ENCODE measurements at regions of chr9 and their contacts with region 1.

Region 1: GRCh38 chr9:98315551-98316060 is 60.2 kb upstream of the TBC1D2 start:
- DNase-seq: peak; percentile 89 to 90
- H3K4me3 ChIP-seq: no peak overlapping the region
- H3K4me3 Mint-ChIP-seq: no peak overlapping the region
- H3K27ac Mint-ChIP-seq: no peak overlapping the region
- H3K4me1 ChIP-seq: no peaks in the 10 kb centered on the region
- H3K4me1 Mint-ChIP-seq: peaks cover 13% of the 10 kb centered on the region
- H3K27me3 ChIP-seq: no peaks in the 10 kb centered on the region
- H3K27me3 Mint-ChIP-seq: no peaks in the 10 kb centered on the region
- CTCF ChIP-seq: peak; percentile 93 to 97

Region 2: DNA sequence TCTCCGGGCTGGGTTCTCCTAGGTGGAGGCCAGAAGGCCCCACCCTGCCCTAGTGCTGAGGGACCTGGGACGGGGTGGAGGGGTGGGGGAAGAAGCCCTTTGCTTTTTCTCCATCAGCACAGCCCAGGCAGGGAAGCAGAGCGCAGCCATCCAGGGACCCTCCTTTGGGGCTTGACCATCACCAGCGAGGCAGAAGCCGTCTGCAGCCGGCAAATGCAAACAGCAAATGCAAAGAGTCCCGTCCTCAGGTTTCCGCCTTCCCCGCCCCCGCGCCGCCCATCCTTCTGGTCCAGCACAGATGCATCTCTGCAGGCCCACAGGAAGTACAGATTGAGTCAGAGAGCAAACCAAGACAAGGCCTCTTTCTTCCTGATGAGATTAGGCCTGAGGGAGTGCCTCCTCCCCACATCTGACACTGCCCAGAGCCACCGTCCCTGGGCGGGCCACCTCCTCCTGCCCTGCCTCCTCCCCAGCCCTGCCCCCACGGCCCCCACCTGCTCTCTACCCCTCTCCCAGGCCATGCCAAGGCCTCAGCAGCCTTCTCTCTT is 146.6 kb before region 1 on chr9:
- CTCF ChIA-PET with region 1: no interaction called
- POLR2A ChIA-PET with region 1: no interaction called
- intact Hi-C with region 1: no loop called
- DNase-seq: peak in 1 of 2 experiments; percentile 58
- H3K4me3 ChIP-seq: no peak overlapping the region
- H3K4me3 Mint-ChIP-seq: no peak overlapping the region
- H3K27ac Mint-ChIP-seq: no peak overlapping the region
- H3K4me1 ChIP-seq: peaks cover 41% of the 10 kb centered on the region
- H3K4me1 Mint-ChIP-seq: peaks cover 34% of the 10 kb centered on the region
- H3K27me3 ChIP-seq: no peaks in the 10 kb centered on the region
- H3K27me3 Mint-ChIP-seq: no peaks in the 10 kb centered on the region
- CTCF ChIP-seq: no peak

Region 3: GRCh38 chr9:98374385-98375051 is 58.9 kb after region 1 on chr9:
- CTCF ChIA-PET with region 1: no interaction called
- POLR2A ChIA-PET with region 1: no interaction called
- intact Hi-C with region 1: loop called (anchors 2 kb)
- DNase-seq: peak; percentile 87 to 95
- H3K4me3 ChIP-seq: no peak overlapping the region
- H3K4me3 Mint-ChIP-seq: peak overlapping the region; percentile 47
- H3K27ac Mint-ChIP-seq: peak overlapping the region; percentile 88
- H3K4me1 ChIP-seq: peaks cover 31% of the 10 kb centered on the region
- H3K4me1 Mint-ChIP-seq: peaks cover 12% of the 10 kb centered on the region
- H3K27me3 ChIP-seq: no peaks in the 10 kb centered on the region
- H3K27me3 Mint-ChIP-seq: no peaks in the 10 kb centered on the region
- CTCF ChIP-seq: no peak

Region 4: DNA sequence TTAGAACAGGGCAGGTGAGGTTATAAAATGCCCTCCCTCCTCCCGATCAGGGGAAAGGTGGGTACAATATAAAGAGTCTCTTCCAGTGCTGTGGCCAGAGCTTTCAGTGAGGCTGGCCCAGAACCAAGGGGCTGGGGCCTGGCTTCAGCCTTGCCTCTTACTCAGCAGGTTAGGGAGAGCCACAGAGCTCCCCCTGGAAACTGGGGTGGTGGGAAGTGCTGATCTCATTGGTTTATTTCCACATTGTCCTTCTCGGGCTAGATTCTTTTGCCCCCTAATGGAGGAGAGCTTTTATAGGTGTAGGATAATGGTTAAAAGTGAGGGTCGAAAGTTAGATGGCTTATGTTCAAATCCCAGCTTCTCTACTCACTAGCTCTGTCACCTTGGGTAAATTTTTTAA is 126.5 kb after region 1 on chr9:
- CTCF ChIA-PET with region 1: no interaction called
- POLR2A ChIA-PET with region 1: no interaction called
- intact Hi-C with region 1: loop called (anchors 5 kb)
- DNase-seq: no peak
- H3K4me3 ChIP-seq: no peak overlapping the region
- H3K4me3 Mint-ChIP-seq: no peak overlapping the region
- H3K27ac Mint-ChIP-seq: no peak overlapping the region
- H3K4me1 ChIP-seq: no peaks in the 10 kb centered on the region
- H3K4me1 Mint-ChIP-seq: no peaks in the 10 kb centered on the region
- H3K27me3 ChIP-seq: no peaks in the 10 kb centered on the region
- H3K27me3 Mint-ChIP-seq: peaks cover 11% of the 10 kb centered on the region
- CTCF ChIP-seq: no peak

Region 5: GRCh38 chr9:98523231-98523896 is 207.8 kb after region 1 on chr9:
- CTCF ChIA-PET with region 1: interaction called, 5 read pairs
- POLR2A ChIA-PET with region 1: no interaction called
- intact Hi-C with region 1: loop called (anchors 1 kb)
- DNase-seq: peak in 1 of 2 experiments; percentile 42
- H3K4me3 ChIP-seq: no peak overlapping the region
- H3K4me3 Mint-ChIP-seq: no peak overlapping the region
- H3K27ac Mint-ChIP-seq: no peak overlapping the region
- H3K4me1 ChIP-seq: no peaks in the 10 kb centered on the region
- H3K4me1 Mint-ChIP-seq: no peaks in the 10 kb centered on the region
- H3K27me3 ChIP-seq: no peaks in the 10 kb centered on the region
- H3K27me3 Mint-ChIP-seq: peaks cover 24% of the 10 kb centered on the region
- CTCF ChIP-seq: peak; percentile 23 to 73

Region 6: DNA sequence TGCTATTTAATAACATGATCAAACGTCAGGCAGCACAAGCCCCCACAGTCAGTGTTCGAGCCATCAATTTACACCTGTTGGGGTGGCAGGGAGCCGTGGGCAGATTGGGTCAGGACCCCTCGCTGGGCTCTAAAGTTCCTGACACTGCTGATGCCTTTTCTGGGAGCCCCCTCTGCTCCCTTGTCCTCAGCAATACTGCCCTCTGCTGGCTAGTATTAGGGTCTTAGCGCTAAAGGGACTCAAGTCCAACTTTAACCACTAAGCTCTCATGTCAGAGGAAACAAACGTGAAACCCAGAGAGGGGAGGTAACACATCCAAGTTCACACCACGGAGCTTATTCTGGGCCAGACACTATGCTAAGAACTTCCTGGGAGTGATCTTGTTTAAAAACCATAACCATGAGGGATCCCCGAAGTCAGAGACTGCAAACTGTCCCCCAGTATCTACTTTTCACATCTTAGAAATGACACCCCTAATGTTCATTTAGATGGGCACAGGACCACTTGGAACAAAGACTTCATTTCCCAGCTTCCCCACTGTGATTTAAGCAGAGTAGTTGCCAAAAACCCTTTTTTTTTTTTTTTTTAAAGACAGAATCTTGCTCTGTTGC is 460.3 kb after region 1 on chr9:
- CTCF ChIA-PET with region 1: interaction called, 4 read pairs
- POLR2A ChIA-PET with region 1: no interaction called
- intact Hi-C with region 1: loop called (anchors 1 kb)
- DNase-seq: peak; percentile 61 to 63
- H3K4me3 ChIP-seq: no peak overlapping the region
- H3K4me3 Mint-ChIP-seq: no peak overlapping the region
- H3K27ac Mint-ChIP-seq: no peak overlapping the region
- H3K4me1 ChIP-seq: peaks cover 43% of the 10 kb centered on the region
- H3K4me1 Mint-ChIP-seq: peaks cover 21% of the 10 kb centered on the region
- H3K27me3 ChIP-seq: no peaks in the 10 kb centered on the region
- H3K27me3 Mint-ChIP-seq: no peaks in the 10 kb centered on the region
- CTCF ChIP-seq: peak; percentile 76 to 79

Region 7: GRCh38 chr9:98791147-98792095 is 475.8 kb after region 1 on chr9:
- CTCF ChIA-PET with region 1: no interaction called
- POLR2A ChIA-PET with region 1: no interaction called
- intact Hi-C with region 1: loop called (anchors 1 kb)
- DNase-seq: peak; percentile 78 to 87
- H3K4me3 ChIP-seq: no peak overlapping the region
- H3K4me3 Mint-ChIP-seq: peak overlapping the region; percentile 23
- H3K27ac Mint-ChIP-seq: peak overlapping the region; percentile 76
- H3K4me1 ChIP-seq: peaks cover 25% of the 10 kb centered on the region
- H3K4me1 Mint-ChIP-seq: peaks cover 36% of the 10 kb centered on the region
- H3K27me3 ChIP-seq: no peaks in the 10 kb centered on the region
- H3K27me3 Mint-ChIP-seq: no peaks in the 10 kb centered on the region
- CTCF ChIP-seq: peak; percentile 96 to 97

Measured in Caco-2 (cell line).